Endothelial cell of umbilical vein (primary cell): ENCODE measurements at regions of chr20 and their contacts with region 1.

Region 1: DNA sequence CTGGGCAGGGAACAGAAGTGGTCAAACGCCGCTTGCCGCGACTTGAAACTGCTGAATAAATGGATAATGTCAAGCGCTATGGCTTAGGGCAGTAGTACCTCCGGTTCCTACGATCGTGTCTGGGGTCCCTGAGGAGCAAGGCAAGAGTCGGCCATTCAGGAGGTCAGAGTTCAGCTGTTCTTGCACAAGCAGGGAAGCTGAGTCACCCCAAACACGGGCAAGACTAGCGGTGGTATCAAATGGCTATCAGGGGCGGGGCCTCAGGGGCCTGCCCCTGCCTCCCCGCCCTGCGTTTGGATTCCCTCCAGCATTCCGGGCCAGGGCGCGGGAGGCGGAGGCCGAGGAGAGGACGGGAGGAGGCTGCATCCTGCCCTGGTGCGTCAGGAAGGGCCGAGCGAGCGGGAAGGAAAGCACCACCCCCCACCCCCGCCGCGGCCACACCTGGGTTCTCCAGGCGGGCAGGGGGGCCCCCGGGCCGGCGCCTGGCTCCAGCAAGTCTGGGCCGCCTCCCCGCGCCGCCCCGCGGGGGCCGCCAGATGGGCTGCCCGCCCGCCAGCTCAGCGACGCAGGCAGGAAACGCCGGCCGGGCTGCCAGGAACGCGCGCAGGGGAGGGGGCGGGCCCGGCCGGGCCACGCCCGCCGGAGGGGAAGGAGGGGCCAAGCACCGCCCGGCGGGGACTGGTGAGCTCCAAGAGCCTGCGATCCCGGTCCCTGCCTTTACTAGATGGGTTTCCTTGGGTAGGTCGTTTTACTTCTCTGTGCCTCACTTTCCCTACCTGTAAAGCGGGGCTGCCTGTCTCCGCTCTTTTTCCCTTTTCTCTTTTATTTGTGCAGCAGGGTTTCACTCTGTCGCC is 32.2 kb upstream of the ID1 start:
- DNase-seq: peak; percentile 99
- H3K4me3 ChIP-seq: peak overlapping the region; percentile 22 to 52 (median 31)
- H3K27ac ChIP-seq: peak overlapping the region; percentile 94
- H3K4me1 ChIP-seq: peaks cover 36% of the 10 kb centered on the region
- H3K27me3 ChIP-seq: no peaks in the 10 kb centered on the region
- CTCF ChIP-seq: no peak
- POLR2A ChIP-seq: peak; percentile 92

Region 2: DNA sequence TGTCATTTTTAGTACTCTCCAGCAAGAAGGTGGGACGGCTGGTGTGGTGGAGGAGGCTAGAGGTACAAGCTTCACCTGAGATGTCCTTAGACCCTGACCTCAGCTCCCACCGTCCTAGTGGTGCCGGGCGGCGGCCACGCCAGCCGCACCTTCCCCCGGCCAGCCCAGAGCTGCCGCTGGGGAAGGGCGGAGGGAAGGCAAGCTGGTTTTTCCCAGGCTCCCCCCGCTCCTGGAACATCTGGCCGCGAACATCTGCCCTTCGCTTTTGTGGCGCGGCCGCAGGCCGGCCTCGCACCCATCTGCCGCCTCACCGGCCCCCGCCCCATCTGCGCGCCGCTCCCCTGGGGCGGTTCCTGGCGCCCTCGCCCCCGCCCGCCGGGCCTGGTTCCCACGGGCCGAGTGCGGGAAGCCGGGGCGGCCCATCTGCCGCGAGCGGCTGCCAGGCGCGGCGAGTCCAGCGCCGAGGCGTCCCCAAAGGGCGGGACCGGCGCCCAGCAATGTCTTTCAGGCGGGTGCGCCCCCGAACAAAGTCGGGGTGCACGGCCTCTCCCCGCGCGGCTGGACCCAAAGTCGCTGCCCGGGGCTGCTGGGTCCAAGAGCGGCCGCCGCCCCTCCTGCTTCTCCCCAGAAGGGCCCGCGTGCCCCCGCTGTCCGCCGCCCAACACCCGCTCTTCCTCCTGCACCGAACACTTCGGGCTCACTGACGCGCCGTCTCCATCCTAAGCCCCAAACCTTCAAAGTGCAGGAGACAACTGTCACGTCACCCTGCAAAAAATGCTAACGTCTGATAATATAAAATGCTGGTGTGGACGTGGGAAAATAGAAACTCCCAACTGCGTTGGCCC is 14.8 kb after region 1 on chr20:
- CTCF ChIA-PET with region 1: interaction called, 8 read pairs
- POLR2A ChIA-PET with region 1: no interaction called
- dilution Hi-C with region 1: no loop called
- intact Hi-C with region 1: loop called (anchors 1 kb)
- DNase-seq: peak; percentile 36
- H3K4me3 ChIP-seq: peak overlapping the region; percentile 21 to 51 (median 38)
- H3K27ac ChIP-seq: no peak overlapping the region
- H3K4me1 ChIP-seq: peaks cover 6% of the 10 kb centered on the region
- H3K27me3 ChIP-seq: no peaks in the 10 kb centered on the region
- CTCF ChIP-seq: no peak
- POLR2A ChIP-seq: no peak